Activated CD4-positive, alpha-beta T cell treated with anti-CD3 and anti-CD28 coated beads for 36 hours (primary cell): ENCODE measurements at regions of chr2 and their contacts with region 1.

Region 1: GRCh38 chr2:197838036-197838435 is 33.6 kb downstream of the PLCL1 start:
- DNase-seq: peak; percentile 51
- ATAC-seq: peak; percentile 98
- H3K4me3 Mint-ChIP-seq: peak overlapping the region; percentile 53
- H3K27ac Mint-ChIP-seq: peak overlapping the region; percentile 59
- H3K4me1 Mint-ChIP-seq: peaks cover 59% of the 10 kb centered on the region
- H3K27me3 Mint-ChIP-seq: no peaks in the 10 kb centered on the region

Region 2: GRCh38 chr2:197851451-197851850 is 13.4 kb after region 1 on chr2:
- CTCF ChIA-PET with region 1: interaction called, 9 read pairs
- POLR2A ChIA-PET with region 1: interaction called, 10 read pairs
- intact Hi-C with region 1: loop called (anchors 1 kb)
- DNase-seq: no peak
- ATAC-seq: no peak
- H3K4me3 Mint-ChIP-seq: no peak overlapping the region
- H3K27ac Mint-ChIP-seq: no peak overlapping the region
- H3K4me1 Mint-ChIP-seq: peaks cover 84% of the 10 kb centered on the region
- H3K27me3 Mint-ChIP-seq: no peaks in the 10 kb centered on the region

Region 3: GRCh38 chr2:197889041-197889440 is 51.0 kb after region 1 on chr2:
- CTCF ChIA-PET with region 1: interaction called, 10 read pairs
- POLR2A ChIA-PET with region 1: interaction called, 6 read pairs
- intact Hi-C with region 1: loop called (anchors 1 kb)
- DNase-seq: peak; percentile 58
- ATAC-seq: peak; percentile 87
- H3K4me3 Mint-ChIP-seq: peak overlapping the region; percentile 38
- H3K27ac Mint-ChIP-seq: peak overlapping the region; percentile 89
- H3K4me1 Mint-ChIP-seq: peaks cover 57% of the 10 kb centered on the region
- H3K27me3 Mint-ChIP-seq: no peaks in the 10 kb centered on the region

Region 4: DNA sequence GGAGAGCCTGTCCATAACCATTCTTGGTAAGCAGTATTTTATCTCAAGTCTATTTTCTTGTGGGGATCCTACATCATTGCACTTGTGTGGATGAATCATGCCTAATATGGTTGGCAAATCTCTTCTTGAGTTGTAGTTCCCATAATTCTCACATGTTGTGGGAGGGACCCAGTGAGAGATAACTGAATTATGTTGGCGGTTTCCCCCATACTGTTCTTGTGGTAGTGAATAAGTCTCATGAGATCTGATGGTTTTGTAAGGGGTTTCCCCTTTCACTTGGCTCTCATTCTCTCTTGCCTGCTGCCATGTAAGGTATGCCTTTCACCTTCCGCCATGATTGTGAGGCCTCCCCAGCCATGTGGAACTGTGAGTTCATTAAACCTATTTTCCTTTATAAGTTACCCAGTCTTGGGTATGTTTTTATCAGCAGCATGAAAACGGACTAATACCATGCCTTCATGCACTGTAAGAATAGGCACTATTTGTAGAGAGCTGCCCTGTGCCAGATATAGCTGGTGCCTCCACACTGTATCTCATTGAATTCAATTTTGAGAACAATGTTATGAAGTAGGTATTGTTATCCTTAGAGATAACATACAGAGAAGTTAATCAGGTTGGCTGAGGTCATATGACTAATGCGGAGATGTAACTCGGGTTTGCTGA is 114.6 kb after region 1 on chr2:
- CTCF ChIA-PET with region 1: interaction called, 4 read pairs
- POLR2A ChIA-PET with region 1: no interaction called
- intact Hi-C with region 1: loop called in 1 of 2 experiments (anchors 5 kb)
- DNase-seq: peak; percentile 49
- ATAC-seq: peak; percentile 89
- H3K4me3 Mint-ChIP-seq: no peak overlapping the region
- H3K27ac Mint-ChIP-seq: peak overlapping the region; percentile 65
- H3K4me1 Mint-ChIP-seq: peaks cover 76% of the 10 kb centered on the region
- H3K27me3 Mint-ChIP-seq: no peaks in the 10 kb centered on the region

Region 5: GRCh38 chr2:198042189-198042588 is 204.2 kb after region 1 on chr2:
- CTCF ChIA-PET with region 1: interaction called, 3 read pairs
- POLR2A ChIA-PET with region 1: interaction called, 9 read pairs
- intact Hi-C with region 1: loop called in 1 of 2 experiments (anchors 1 kb)
- DNase-seq: no peak
- ATAC-seq: no peak
- H3K4me3 Mint-ChIP-seq: no peak overlapping the region
- H3K27ac Mint-ChIP-seq: no peak overlapping the region
- H3K4me1 Mint-ChIP-seq: peaks cover 27% of the 10 kb centered on the region
- H3K27me3 Mint-ChIP-seq: no peaks in the 10 kb centered on the region